Activated CD4-positive, alpha-beta memory T cell treated with anti-CD3 and anti-CD28 coated beads for 36 hours (primary cell): ENCODE measurements at regions of chr1 and their contacts with region 1.

Region 1: DNA sequence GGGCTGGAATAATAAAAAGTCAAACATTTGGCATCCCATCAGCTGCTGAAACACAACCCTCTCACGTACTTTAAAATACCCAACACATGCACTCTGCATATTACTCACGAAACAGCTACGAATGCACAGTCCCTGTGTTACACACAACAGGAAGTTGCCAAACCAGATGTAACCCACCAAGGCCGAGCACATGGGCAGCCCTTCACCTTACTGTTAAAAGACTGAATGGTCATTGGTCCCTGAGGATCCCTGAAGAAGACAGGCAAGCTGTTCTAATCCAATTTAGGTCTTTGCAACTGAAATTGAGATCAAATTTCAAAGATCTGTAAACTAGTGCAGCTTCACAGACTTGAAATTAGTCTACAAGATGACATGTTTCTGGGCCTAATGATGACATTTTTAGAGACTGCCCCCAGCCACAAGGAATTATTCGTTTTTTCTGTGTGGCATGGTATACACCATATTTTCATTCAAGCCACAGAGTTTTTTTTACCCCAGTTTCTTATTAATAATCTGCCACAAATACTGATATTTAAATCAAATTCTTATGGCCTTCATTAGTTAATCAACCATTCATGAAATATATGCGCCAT is 25.6 kb upstream of the IER5 start:
- DNase-seq: peak; percentile 61
- H3K4me3 Mint-ChIP-seq: peak overlapping the region; percentile 58
- H3K27ac Mint-ChIP-seq: peak overlapping the region; percentile 78
- H3K4me1 Mint-ChIP-seq: peaks cover 20% of the 10 kb centered on the region
- H3K27me3 Mint-ChIP-seq: no peaks in the 10 kb centered on the region

Region 2: DNA sequence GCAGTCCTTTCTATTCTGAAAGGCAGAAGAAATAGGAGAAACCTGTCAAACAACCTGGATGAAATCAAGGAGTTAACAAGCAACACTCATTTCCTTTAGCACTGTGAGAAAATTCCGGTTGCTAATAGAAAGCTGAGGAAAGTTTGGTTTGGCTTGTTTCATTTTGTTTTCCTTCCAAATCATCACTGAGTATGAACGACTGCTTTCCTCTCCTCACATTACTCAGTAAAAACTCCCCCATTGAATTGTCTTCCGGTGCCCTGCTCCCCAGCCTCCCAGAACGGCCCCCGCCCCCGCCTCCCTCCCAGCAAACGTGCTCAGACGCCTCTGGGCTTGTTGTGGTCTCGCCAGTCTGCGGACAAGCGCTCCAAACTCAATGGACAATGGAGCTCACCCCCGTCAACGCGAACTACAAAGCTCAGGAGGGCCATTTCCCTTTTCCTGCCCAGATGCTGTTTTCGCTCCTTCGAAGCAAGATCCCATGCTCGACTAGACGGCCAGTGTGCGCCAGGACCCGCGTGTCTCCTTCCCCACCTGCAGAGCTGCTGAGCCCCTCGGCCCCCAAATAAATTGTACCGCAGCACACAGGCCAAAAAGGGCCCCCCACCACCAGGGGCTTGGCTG is 41.0 kb before region 1 on chr1:
- CTCF ChIA-PET with region 1: no interaction called
- POLR2A ChIA-PET with region 1: interaction called, 13 read pairs
- intact Hi-C with region 1: no loop called
- DNase-seq: peak; percentile 84
- H3K4me3 Mint-ChIP-seq: peak overlapping the region; percentile 94
- H3K27ac Mint-ChIP-seq: peak overlapping the region; percentile 97
- H3K4me1 Mint-ChIP-seq: peaks cover 37% of the 10 kb centered on the region
- H3K27me3 Mint-ChIP-seq: no peaks in the 10 kb centered on the region

Region 3: DNA sequence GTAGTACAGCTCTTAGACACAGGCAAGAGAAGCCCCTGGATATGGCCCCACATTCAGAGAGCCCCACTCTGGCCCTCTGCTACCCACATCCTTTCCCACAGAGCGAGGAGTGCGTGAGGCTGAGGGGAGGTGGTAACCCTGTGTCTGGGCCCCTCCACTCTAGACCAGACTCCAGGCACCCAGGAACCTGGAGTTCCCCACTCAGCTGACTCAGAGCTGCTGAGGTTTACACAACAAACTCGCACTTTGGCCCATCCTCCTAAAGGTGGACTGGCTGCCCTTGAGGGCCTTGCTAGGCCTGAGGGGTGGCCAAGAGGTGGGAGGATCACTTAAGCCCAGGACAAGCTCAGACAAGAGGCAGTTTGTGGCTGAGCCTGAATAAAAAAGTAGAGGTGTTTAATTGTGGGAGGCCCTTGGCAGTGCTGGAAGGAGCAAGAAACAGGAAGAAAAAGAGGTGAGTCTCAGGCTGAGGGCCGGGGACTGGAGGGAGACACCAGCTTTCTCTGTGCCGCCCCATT is 18.4 kb before region 1 on chr1:
- CTCF ChIA-PET with region 1: no interaction called
- POLR2A ChIA-PET with region 1: interaction called, 3 read pairs
- intact Hi-C with region 1: loop called (anchors 1 kb)
- DNase-seq: peak; percentile 79
- H3K4me3 Mint-ChIP-seq: no peak overlapping the region
- H3K27ac Mint-ChIP-seq: peak overlapping the region; percentile 72
- H3K4me1 Mint-ChIP-seq: peaks cover 38% of the 10 kb centered on the region
- H3K27me3 Mint-ChIP-seq: no peaks in the 10 kb centered on the region

Region 4: GRCh38 chr1:181099152-181100014 is 36.5 kb after region 1 on chr1:
- CTCF ChIA-PET with region 1: no interaction called
- POLR2A ChIA-PET with region 1: no interaction called
- intact Hi-C with region 1: loop called (anchors 1 kb)
- DNase-seq: peak; percentile 76
- H3K4me3 Mint-ChIP-seq: peak overlapping the region; percentile 47
- H3K27ac Mint-ChIP-seq: peak overlapping the region; percentile 84
- H3K4me1 Mint-ChIP-seq: peaks cover 71% of the 10 kb centered on the region
- H3K27me3 Mint-ChIP-seq: no peaks in the 10 kb centered on the region